ENCODE measurements at regions of chr18 and their contacts with region 1.

Region 1: GRCh38 chr18:46067431-46068007 is 4.5 kb downstream of the PSTPIP2 start:
- DNase-seq: no peak
- ATAC-seq: no peak
- H3K4me3 ChIP-seq: no peak overlapping the region
- H3K27ac ChIP-seq: no peak overlapping the region
- H3K4me1 ChIP-seq: peaks cover 0 to 50% (median 10%) of the 10 kb centered on the region in 12 donors
- H3K27me3 ChIP-seq: no peaks in the 10 kb centered on the region
- CTCF ChIP-seq: no peak
- POLR2A ChIP-seq: no peak

Region 2: DNA sequence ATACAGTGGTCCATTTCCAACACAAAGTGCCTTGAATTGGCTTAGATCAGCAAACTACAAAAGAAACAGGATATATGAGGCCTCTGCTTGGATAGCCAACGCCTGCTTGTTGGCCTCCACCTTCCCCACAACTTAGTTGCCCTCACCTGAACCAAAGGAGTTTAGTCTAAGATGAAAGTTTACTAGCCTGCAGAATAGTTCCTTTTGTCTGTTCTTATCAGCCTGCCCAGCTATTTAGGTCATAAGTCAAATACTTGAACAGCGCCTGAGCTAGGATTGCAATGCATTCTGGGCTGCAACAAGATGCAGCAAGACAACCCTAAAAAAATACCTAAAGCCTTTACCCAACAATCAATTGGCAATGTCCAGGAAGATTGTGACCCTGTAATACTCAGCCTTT is 87.3 kb before region 1 on chr18:
- intact Hi-C with region 1: loop called in 4 of 10 experiments (anchors 2 to 10 kb)
- DNase-seq: no peak
- ATAC-seq: peak in 1 of 4 donors; percentile 42
- H3K4me3 ChIP-seq: no peak overlapping the region
- H3K27ac ChIP-seq: no peak overlapping the region
- H3K4me1 ChIP-seq: peaks cover 0 to 13% (median 0%) of the 10 kb centered on the region in 12 donors
- H3K27me3 ChIP-seq: no peaks in the 10 kb centered on the region
- CTCF ChIP-seq: no peak
- POLR2A ChIP-seq: no peak

Region 3: DNA sequence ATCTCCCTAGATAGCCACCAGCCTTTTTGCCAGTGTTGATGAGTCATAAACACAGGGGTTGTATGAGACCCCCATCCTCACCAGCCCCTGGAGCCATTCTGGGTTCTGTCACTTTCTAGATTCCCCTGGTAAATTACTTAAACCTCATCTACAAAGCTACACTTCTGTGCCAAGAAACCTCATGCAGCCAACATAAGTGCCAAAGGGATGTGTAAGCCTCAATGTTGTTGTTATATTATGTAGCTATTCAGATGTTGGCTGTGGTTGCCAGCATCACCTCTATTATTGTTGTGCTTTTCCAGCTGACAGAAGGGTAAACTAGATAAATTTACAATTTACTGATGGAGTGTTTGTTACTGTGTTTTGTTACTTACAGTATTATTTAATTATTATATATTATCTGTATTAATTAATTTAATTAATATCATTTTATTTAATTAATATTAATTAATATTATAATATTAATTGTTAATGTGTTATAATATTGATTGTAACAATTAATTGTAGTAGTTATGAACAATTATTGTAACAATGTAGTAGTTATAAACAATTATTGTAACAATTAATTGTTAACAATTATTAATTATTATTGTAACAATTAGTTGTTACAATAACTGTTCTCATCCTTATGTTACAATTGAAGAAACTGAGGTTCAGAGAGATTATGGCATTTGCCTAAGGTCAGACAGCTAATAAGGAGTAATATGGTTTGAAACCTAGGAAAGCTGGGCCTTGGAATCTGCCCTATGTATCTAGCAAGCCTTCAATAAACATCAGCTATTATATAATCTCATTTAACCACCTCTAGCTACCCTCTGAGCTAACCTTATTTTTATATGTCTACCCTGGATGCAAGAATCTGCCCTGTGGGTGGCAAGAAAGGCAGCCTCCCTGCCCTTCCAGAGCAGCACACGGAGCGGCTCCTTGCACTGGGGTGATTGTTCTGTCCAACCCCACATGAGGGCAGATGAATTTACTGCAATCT is 31.5 kb before region 1 on chr18:
- intact Hi-C with region 1: loop called in 1 of 10 experiments (anchors 2 kb)
- DNase-seq: no peak
- ATAC-seq: no peak
- H3K4me3 ChIP-seq: no peak overlapping the region
- H3K27ac ChIP-seq: no peak overlapping the region
- H3K4me1 ChIP-seq: peaks cover 0 to 38% (median 0%) of the 10 kb centered on the region in 12 donors
- H3K27me3 ChIP-seq: no peaks in the 10 kb centered on the region
- CTCF ChIP-seq: no peak
- POLR2A ChIP-seq: no peak

Measured in heart left ventricle (tissue), 16 donors.